MCF 10A (cell line): ENCODE measurements at regions of chr2 and their contacts with region 1.

Region 1: DNA sequence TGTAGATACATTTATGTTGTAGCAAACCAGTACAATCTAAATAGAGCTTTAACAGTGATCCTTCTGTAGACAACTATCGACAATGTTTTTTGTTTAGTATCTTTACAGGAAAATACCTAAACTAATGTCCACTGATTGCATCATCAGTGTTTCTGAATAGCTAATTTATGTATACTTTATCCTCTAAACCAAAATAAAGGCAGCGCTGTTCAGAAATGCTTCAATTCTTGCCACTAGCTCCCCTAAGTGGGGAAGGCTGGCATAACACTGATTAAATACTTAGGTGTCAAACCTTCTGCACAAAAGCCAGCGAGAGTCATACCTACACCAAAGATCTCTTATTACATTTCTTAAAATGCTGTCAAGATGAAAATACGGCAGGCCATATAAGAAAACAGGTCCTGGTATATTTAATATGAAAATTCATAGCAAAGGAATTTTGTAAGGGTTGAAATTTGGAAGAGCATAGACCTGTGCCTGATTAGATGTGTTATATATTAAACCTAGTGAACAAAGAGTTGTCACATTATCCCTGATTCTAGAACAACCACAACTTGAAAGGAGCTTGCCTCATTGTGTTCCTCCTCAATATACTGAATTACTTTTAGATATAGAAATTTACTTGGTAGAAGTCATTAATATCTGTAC is 1693.4 kb upstream of the SLC39A10 start:
- DNase-seq: peak; percentile 71
- H3K4me3 Mint-ChIP-seq: no peak overlapping the region
- H3K27ac Mint-ChIP-seq: peak overlapping the region; percentile 69
- H3K4me1 Mint-ChIP-seq: no peaks in the 10 kb centered on the region
- H3K27me3 Mint-ChIP-seq: no peaks in the 10 kb centered on the region
- CTCF ChIP-seq: peak; percentile 61

Region 2: GRCh38 chr2:192749606-192750200 is 1213.9 kb before region 1 on chr2:
- CTCF ChIA-PET with region 1: interaction called, 5 read pairs
- POLR2A ChIA-PET with region 1: no interaction called
- intact Hi-C with region 1: loop called (anchors 10 kb)
- DNase-seq: peak; percentile 40
- H3K4me3 Mint-ChIP-seq: no peak overlapping the region
- H3K27ac Mint-ChIP-seq: no peak overlapping the region
- H3K4me1 Mint-ChIP-seq: peaks cover 4% of the 10 kb centered on the region
- H3K27me3 Mint-ChIP-seq: no peaks in the 10 kb centered on the region
- CTCF ChIP-seq: peak; percentile 48

Region 3: GRCh38 chr2:193695367-193695766 is 268.2 kb before region 1 on chr2:
- CTCF ChIA-PET with region 1: interaction called, 19 read pairs
- POLR2A ChIA-PET with region 1: no interaction called
- intact Hi-C with region 1: loop called (anchors 1 kb)
- DNase-seq: peak; percentile 57
- H3K4me3 Mint-ChIP-seq: no peak overlapping the region
- H3K27ac Mint-ChIP-seq: no peak overlapping the region
- H3K4me1 Mint-ChIP-seq: no peaks in the 10 kb centered on the region
- H3K27me3 Mint-ChIP-seq: no peaks in the 10 kb centered on the region
- CTCF ChIP-seq: peak; percentile 46

Region 4: GRCh38 chr2:193837111-193837737 is 126.4 kb before region 1 on chr2:
- CTCF ChIA-PET with region 1: no interaction called
- POLR2A ChIA-PET with region 1: no interaction called
- intact Hi-C with region 1: no loop called
- DNase-seq: peak; percentile 51
- H3K4me3 Mint-ChIP-seq: no peak overlapping the region
- H3K27ac Mint-ChIP-seq: peak overlapping the region; percentile 35
- H3K4me1 Mint-ChIP-seq: peaks cover 5% of the 10 kb centered on the region
- H3K27me3 Mint-ChIP-seq: no peaks in the 10 kb centered on the region
- CTCF ChIP-seq: no peak

Region 5: GRCh38 chr2:194819344-194819743 is 855.7 kb after region 1 on chr2:
- CTCF ChIA-PET with region 1: no interaction called
- POLR2A ChIA-PET with region 1: no interaction called
- intact Hi-C with region 1: loop called (anchors 5 kb)
- DNase-seq: peak; percentile 50
- H3K4me3 Mint-ChIP-seq: no peak overlapping the region
- H3K27ac Mint-ChIP-seq: no peak overlapping the region
- H3K4me1 Mint-ChIP-seq: no peaks in the 10 kb centered on the region
- H3K27me3 Mint-ChIP-seq: no peaks in the 10 kb centered on the region
- CTCF ChIP-seq: peak; percentile 20